ENCODE measurements at regions of chr3 and their contacts with region 1.

Region 1: GRCh38 chr3:37537914-37538691 is 323.6 kb upstream of the CTDSPL start:
- DNase-seq: no peak
- H3K4me3 Mint-ChIP-seq: no peak overlapping the region
- H3K27ac Mint-ChIP-seq: no peak overlapping the region
- H3K4me1 Mint-ChIP-seq: no peaks in the 10 kb centered on the region
- H3K27me3 Mint-ChIP-seq: peaks cover 94% of the 10 kb centered on the region
- CTCF ChIP-seq: no peak

Region 2: DNA sequence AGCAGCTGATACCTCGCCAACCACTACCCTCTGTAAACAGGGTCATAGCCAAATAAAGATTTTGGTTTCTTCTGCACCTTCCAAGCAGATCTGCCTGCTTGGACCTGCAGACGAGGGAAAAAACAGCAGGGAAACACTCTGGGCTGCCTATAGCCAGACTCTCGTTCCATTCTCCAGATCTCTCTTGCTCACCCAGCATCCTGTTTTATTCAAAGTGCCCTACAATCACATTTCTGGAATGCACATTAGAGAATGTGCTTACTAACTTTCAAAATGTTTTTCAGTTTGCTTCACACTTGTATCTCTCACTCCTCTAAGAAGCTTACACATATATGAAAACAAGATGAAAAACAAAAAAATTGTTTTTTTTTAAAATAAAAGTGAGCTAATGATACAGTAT is 473.4 kb before region 1 on chr3:
- CTCF ChIA-PET with region 1: no interaction called
- intact Hi-C with region 1: loop called (anchors 10 kb)
- DNase-seq: no peak
- H3K4me3 Mint-ChIP-seq: no peak overlapping the region
- H3K27ac Mint-ChIP-seq: no peak overlapping the region
- H3K4me1 Mint-ChIP-seq: no peaks in the 10 kb centered on the region
- H3K27me3 Mint-ChIP-seq: no peaks in the 10 kb centered on the region
- CTCF ChIP-seq: no peak

Region 3: GRCh38 chr3:37221407-37221806 is 316.7 kb before region 1 on chr3:
- CTCF ChIA-PET with region 1: no interaction called
- intact Hi-C with region 1: no loop called
- DNase-seq: peak; percentile 57
- H3K4me3 Mint-ChIP-seq: no peak overlapping the region
- H3K27ac Mint-ChIP-seq: peak overlapping the region; percentile 45
- H3K4me1 Mint-ChIP-seq: peaks cover 34% of the 10 kb centered on the region
- H3K27me3 Mint-ChIP-seq: no peaks in the 10 kb centered on the region
- CTCF ChIP-seq: no peak

Measured in Calu3 (cell line).